ENCODE measurements at regions of chr9 and their contacts with region 1.

Region 1: GRCh38 chr9:124861342-124862229 is at the starts of genes ARPC5L and RPL35:
- DNase-seq: peak; percentile 96
- ATAC-seq: peak; percentile 95
- H3K4me3 Mint-ChIP-seq: peak within 1 kb of the TSS; percentile 97
- H3K27ac Mint-ChIP-seq: peak within 1 kb of the TSS; percentile 98
- H3K4me1 Mint-ChIP-seq: peaks cover 34% of the 10 kb centered on the region
- H3K27me3 Mint-ChIP-seq: no peaks in the 10 kb centered on the region
- total RNA-seq, gene ARPC5L: 82.0 to 86.0 TPM
- total RNA-seq, gene RPL35: 1,341 to 1,437 TPM

Region 2: DNA sequence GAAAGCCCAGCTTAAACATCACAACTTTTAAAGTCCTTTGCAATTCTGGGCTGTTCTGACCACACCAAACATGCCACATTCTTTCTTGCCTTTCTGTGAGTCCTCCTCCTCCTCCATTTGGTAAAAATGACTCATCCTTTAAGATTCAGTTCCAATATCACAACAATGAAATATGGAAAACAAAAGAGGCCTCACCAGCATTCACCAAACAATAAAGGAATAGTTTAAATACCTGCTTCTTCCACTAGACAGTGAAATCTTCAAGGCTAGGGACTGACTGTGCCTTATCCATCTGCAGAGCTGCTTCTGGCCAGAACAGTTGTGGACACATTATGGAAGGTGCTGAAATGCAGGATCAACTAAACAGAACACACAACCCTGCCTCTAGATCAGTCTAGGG is 126.5 kb before region 1 on chr9:
- CTCF ChIA-PET with region 1: no interaction called
- POLR2A ChIA-PET with region 1: no interaction called
- DNase-seq: no peak
- ATAC-seq: no peak
- H3K4me3 Mint-ChIP-seq: no peak overlapping the region
- H3K27ac Mint-ChIP-seq: no peak overlapping the region
- H3K4me1 Mint-ChIP-seq: peaks cover 5% of the 10 kb centered on the region
- H3K27me3 Mint-ChIP-seq: peaks cover 18% of the 10 kb centered on the region

Region 3: DNA sequence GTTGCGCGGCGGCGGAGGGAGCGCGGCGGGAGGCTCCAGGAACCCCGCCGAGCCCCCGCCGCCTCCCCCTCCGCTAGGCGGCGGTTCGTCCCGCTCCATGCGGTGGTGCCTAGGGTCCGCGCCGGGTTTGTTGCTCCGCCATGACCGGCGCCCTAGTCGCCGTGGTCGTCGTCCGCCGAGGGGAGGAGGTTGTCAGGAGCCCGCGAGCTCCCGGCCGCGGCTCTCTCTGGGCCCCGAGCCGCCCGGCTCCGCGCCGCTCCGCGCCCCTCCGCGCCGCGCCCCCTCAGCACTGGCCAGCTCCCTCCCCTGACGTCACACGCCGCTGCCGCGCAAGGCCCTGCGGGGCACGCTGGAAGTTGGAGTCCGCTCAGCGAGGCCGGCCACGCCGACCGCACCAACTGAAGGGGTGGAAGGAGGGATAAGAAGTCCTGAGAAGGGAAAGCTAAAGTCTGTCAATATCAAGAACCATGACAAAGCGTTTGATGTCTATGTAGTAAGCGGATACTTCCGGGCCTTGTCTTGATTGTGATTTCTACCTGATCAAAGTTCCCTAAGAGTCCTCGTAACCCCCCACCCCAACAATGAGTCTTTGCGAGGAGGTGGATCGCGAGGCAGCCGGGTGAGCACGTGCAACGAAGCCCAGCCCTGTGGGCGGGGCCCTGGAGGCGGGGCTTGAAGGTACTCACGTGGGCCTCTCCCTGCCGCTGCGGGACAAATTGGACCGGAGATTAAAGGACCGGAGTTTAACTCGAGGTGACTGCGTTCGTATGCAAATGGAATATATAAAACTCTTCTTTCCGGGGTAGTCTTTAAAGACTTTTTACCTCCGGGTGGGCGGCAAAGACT is 90.3 kb before region 1 on chr9 and contains the start of gene NR6A1:
- CTCF ChIA-PET with region 1: interaction called, 316 read pairs
- POLR2A ChIA-PET with region 1: interaction called, 7 read pairs
- DNase-seq: peak; percentile 95
- ATAC-seq: peak; percentile 94
- H3K4me3 Mint-ChIP-seq: peak within 1 kb of the TSS; percentile 82
- H3K27ac Mint-ChIP-seq: peak within 1 kb of the TSS; percentile 88
- H3K4me1 Mint-ChIP-seq: peaks cover 48% of the 10 kb centered on the region
- H3K27me3 Mint-ChIP-seq: peaks cover 58% of the 10 kb centered on the region
- total RNA-seq, gene NR6A1: 0.18 to 0.26 TPM

Region 4: GRCh38 chr9:124879226-124879625 is 17.6 kb after region 1 on chr9:
- CTCF ChIA-PET with region 1: no interaction called
- POLR2A ChIA-PET with region 1: interaction called, 11 read pairs
- DNase-seq: no peak
- ATAC-seq: no peak
- H3K4me3 Mint-ChIP-seq: no peak overlapping the region
- H3K27ac Mint-ChIP-seq: no peak overlapping the region
- H3K4me1 Mint-ChIP-seq: no peaks in the 10 kb centered on the region
- H3K27me3 Mint-ChIP-seq: no peaks in the 10 kb centered on the region

Region 5: DNA sequence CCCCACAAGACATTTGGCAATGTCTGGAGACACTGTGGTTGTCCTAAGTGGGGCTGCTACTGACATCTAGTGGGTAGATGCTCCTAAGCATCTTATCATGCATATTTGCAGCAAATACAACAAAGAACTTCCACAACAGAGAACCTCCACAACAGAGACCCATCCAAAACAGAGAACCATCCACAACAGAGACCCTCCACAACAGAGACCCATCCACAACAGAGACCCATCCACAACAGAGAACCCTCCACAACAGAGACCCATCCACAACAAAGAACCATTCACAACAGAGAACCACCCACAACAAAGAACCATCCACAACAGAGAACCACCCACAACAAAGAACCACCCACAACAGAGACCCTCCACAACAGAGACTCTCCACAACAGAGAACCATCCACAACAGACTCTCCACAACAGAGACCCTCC is 33.2 kb after region 1 on chr9:
- CTCF ChIA-PET with region 1: interaction called, 12 read pairs
- POLR2A ChIA-PET with region 1: interaction called, 8 read pairs
- DNase-seq: peak; percentile 69
- ATAC-seq: peak; percentile 90
- H3K4me3 Mint-ChIP-seq: no peak overlapping the region
- H3K27ac Mint-ChIP-seq: peak overlapping the region; percentile 61
- H3K4me1 Mint-ChIP-seq: peaks cover 18% of the 10 kb centered on the region
- H3K27me3 Mint-ChIP-seq: no peaks in the 10 kb centered on the region

Region 6: GRCh38 chr9:124940693-124941453 is 79.3 kb after region 1 on chr9 and contains the start of gene GOLGA1:
- CTCF ChIA-PET with region 1: no interaction called
- POLR2A ChIA-PET with region 1: interaction called, 11 read pairs
- DNase-seq: peak; percentile 94
- ATAC-seq: peak; percentile 90
- H3K4me3 Mint-ChIP-seq: peak within 1 kb of the TSS; percentile 90
- H3K27ac Mint-ChIP-seq: peak within 1 kb of the TSS; percentile 94
- H3K4me1 Mint-ChIP-seq: peaks cover 21% of the 10 kb centered on the region
- H3K27me3 Mint-ChIP-seq: no peaks in the 10 kb centered on the region
- total RNA-seq, gene GOLGA1: 14.0 to 16.2 TPM